A549 (cell line): ENCODE measurements at regions of chr14 and their contacts with region 1.

Region 1: GRCh38 chr14:24075485-24076301 is 4.3 kb downstream of the CPNE6 start:
- DNase-seq: no peak
- ATAC-seq: no peak
- H3K4me3 ChIP-seq: no peak overlapping the region
- H3K27ac ChIP-seq: no peak overlapping the region
- H3K4me1 ChIP-seq: peaks cover 7% of the 10 kb centered on the region
- CTCF ChIP-seq: no peak
- EP300 ChIP-seq: no peak
- POLR2A ChIP-seq: no peak
- RAD21 ChIP-seq: no peak

Region 2: GRCh38 chr14:23984891-23985602 is 90.6 kb before region 1 on chr14:
- CTCF ChIA-PET with region 1: no interaction called
- POLR2A ChIA-PET with region 1: no interaction called
- DNase-seq: peak; percentile 10 to 70
- ATAC-seq: peak in 1 of 2 experiments; percentile 42; a peak in 2 of 6 replicates
- H3K4me3 ChIP-seq: no peak overlapping the region
- H3K27ac ChIP-seq: peak overlapping the region; percentile 73 to 79
- H3K4me1 ChIP-seq: peaks cover 41% of the 10 kb centered on the region
- CTCF ChIP-seq: no peak
- EP300 ChIP-seq: peak in 1 of 2 experiments; percentile 46; a peak in 1 of 5 replicates
- POLR2A ChIP-seq: no peak
- RAD21 ChIP-seq: no peak; a peak in 1 of 5 replicates

Region 3: GRCh38 chr14:24086193-24086955 is 10.7 kb after region 1 on chr14:
- CTCF ChIA-PET with region 1: interaction called, 80 read pairs
- POLR2A ChIA-PET with region 1: interaction called, 4 read pairs
- DNase-seq: no peak
- ATAC-seq: no peak
- H3K4me3 ChIP-seq: no peak overlapping the region
- H3K27ac ChIP-seq: no peak overlapping the region
- H3K4me1 ChIP-seq: peaks cover 5% of the 10 kb centered on the region
- CTCF ChIP-seq: no peak
- EP300 ChIP-seq: no peak
- POLR2A ChIP-seq: no peak
- RAD21 ChIP-seq: no peak

Region 4: GRCh38 chr14:24093901-24094761 is 18.4 kb after region 1 on chr14 and contains the start of gene PCK2:
- CTCF ChIA-PET with region 1: interaction called, 80 read pairs
- POLR2A ChIA-PET with region 1: interaction called, 16 read pairs
- DNase-seq: peak; percentile 95 to 97
- ATAC-seq: peak; percentile 93 to 94
- H3K4me3 ChIP-seq: peak within 1 kb of the TSS; percentile 70
- H3K27ac ChIP-seq: peak within 1 kb of the TSS; percentile 95 to 100
- H3K4me1 ChIP-seq: peaks cover 18% of the 10 kb centered on the region
- CTCF ChIP-seq: no peak
- EP300 ChIP-seq: no peak
- POLR2A ChIP-seq: peak; percentile 95
- RAD21 ChIP-seq: no peak
- polyA plus RNA-seq, gene PCK2: 52.1 and 60.2 TPM in 2 replicates